ENCODE measurements at regions of chr15 and their contacts with region 1.

Region 1: DNA sequence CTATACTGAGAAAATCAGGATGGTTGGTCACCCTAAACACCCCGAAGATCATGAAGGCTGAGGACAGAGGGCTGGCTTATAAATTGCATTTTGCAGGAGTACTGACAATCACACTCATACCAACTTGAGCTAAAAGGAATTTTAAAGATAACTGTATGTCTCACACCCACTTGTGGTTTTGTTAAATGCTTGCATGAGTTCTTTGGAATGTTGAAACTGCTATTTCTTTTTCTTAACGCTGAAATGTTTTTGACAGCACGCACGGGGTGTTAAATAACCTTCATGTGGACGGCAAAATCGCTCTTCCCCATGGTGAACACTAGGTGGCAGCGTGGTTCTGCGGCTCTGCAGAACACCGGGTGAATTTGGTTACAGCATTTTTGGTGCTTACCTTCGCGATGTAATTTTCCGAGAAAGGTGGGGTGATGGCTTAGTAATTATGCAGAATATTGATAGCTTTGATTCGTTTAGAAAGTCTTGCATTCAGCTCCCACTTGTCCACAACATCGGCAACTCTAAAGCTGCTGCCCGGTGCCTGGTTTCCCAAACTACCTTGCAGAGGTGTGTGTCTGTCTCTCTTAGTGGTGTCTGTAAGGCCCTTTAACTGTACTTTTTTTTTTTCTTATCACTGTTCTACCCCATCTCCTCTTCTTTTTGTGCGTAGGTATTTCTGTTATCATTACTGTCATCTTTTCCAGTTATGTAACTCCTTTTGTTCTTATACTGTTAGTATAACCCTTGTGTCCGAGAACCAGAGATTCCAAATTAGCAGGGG is 51.7 kb downstream of the ARNT2 start:
- DNase-seq: peak in 4 of 5 donors; percentile 56 to 78 (median 70)
- H3K4me3 ChIP-seq: no peak overlapping the region
- H3K27ac ChIP-seq: no peak overlapping the region
- H3K4me1 ChIP-seq: peaks cover 2 to 15% (median 7%) of the 10 kb centered on the region in 3 donors
- H3K27me3 ChIP-seq: no peaks in the 10 kb centered on the region
- CTCF ChIP-seq: peak; percentile 92

Region 2: DNA sequence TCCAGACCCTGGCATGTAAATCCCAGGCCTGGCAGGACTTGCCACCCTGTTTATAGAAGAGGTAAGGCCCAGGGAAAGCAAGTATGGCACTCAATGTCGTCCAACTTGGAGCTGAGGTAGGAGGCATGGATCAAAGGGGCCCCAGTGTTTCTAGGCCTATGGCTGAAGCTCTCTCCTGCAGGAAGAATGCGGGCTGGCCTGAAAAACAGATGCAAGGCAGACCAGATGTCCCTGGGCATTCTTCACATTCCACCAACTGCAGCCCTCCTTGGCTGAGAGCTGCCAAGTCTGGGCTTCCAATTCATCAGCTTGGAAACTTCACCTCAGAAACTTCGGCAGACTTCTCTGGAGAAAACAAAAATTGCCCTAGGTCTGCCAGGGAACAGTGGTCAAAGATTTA is 511.6 kb after region 1 on chr15:
- intact Hi-C with region 1: loop called (anchors 10 kb)
- DNase-seq: peak in 3 of 5 donors; percentile 43 to 69 (median 52)
- H3K4me3 ChIP-seq: no peak overlapping the region
- H3K27ac ChIP-seq: no peak overlapping the region
- H3K4me1 ChIP-seq: no peaks in the 10 kb centered on the region
- H3K27me3 ChIP-seq: no peaks in the 10 kb centered on the region
- CTCF ChIP-seq: no peak

Measured in kidney (tissue), 22 donors.